ENCODE measurements at regions of chr5 and their contacts with region 1.

Region 1: GRCh38 chr5:55856516-55857246 is 5.5 kb downstream of the IL31RA start:
- DNase-seq: peak; percentile 28
- H3K4me3 Mint-ChIP-seq: peak overlapping the region; percentile 26
- H3K27ac Mint-ChIP-seq: peak overlapping the region; percentile 13
- H3K4me1 Mint-ChIP-seq: peaks cover 56% of the 10 kb centered on the region
- H3K27me3 Mint-ChIP-seq: no peaks in the 10 kb centered on the region

Region 2: GRCh38 chr5:55711968-55712859 is 144.5 kb before region 1 on chr5 and contains the start of gene SLC38A9:
- intact Hi-C with region 1: loop called (anchors 2 kb)
- DNase-seq: peak; percentile 88
- H3K4me3 Mint-ChIP-seq: peak within 1 kb of the TSS; percentile 98
- H3K27ac Mint-ChIP-seq: peak within 1 kb of the TSS; percentile 90
- H3K4me1 Mint-ChIP-seq: peaks cover 30% of the 10 kb centered on the region
- H3K27me3 Mint-ChIP-seq: peaks cover 4% of the 10 kb centered on the region
- total RNA-seq, gene SLC38A9: 19.3 and 22.2 TPM in 2 replicates

Region 3: GRCh38 chr5:55763746-55764420 is 92.8 kb before region 1 on chr5:
- intact Hi-C with region 1: loop called (anchors 2 kb)
- DNase-seq: no peak
- H3K4me3 Mint-ChIP-seq: peak overlapping the region; percentile 61
- H3K27ac Mint-ChIP-seq: peak overlapping the region; percentile 62
- H3K4me1 Mint-ChIP-seq: peaks cover 39% of the 10 kb centered on the region
- H3K27me3 Mint-ChIP-seq: no peaks in the 10 kb centered on the region

Region 4: DNA sequence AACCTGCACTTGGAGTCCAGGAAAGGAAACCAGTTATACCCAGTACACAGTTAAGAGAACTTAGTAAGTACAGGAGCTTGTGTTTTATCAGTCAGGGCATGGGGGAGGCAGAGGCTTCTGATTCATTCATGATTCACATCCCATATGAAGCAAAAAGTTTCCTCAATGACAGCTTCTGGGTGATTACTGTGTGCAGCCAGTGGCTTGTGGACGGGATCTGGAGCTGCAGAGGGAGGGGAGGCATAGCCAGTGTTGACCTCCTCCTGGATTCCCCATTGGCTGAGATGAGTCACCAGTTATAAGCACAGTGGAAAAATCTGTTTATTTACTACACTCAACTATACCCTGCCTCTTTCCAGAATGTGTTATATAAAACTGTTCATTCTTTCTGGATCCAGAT is 12.2 kb after region 1 on chr5:
- intact Hi-C with region 1: loop called (anchors 1 kb)
- DNase-seq: no peak
- H3K4me3 Mint-ChIP-seq: no peak overlapping the region
- H3K27ac Mint-ChIP-seq: peak overlapping the region; percentile 6
- H3K4me1 Mint-ChIP-seq: peaks cover 20% of the 10 kb centered on the region
- H3K27me3 Mint-ChIP-seq: no peaks in the 10 kb centered on the region

Region 5: GRCh38 chr5:55897905-55898304 is 41.2 kb after region 1 on chr5:
- intact Hi-C with region 1: loop called (anchors 2 kb)
- DNase-seq: no peak
- H3K4me3 Mint-ChIP-seq: no peak overlapping the region
- H3K27ac Mint-ChIP-seq: no peak overlapping the region
- H3K4me1 Mint-ChIP-seq: peaks cover 39% of the 10 kb centered on the region
- H3K27me3 Mint-ChIP-seq: peaks cover 3% of the 10 kb centered on the region

Region 6: DNA sequence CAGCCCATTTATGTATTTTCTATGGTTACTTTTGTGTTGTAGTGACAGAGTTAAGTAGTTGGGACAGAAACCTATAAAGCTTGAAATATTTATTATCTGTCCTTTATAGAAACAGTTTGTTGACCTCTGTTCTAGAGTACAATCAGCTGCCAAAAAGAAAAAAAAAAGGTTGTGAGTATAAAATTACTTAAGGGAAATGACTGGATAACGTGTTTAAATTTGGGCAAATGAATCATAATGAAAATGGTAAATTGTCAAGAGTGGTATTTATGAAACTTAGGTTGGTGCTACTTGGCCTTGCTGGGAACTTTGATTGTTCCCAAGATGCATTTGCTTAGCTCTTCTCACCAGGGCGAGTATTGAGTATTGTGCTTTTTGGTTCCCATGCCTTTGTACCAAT is 208.3 kb after region 1 on chr5:
- intact Hi-C with region 1: no loop called
- DNase-seq: no peak
- H3K4me3 Mint-ChIP-seq: no peak overlapping the region
- H3K27ac Mint-ChIP-seq: no peak overlapping the region
- H3K4me1 Mint-ChIP-seq: peaks cover 29% of the 10 kb centered on the region
- H3K27me3 Mint-ChIP-seq: peaks cover 38% of the 10 kb centered on the region

Measured in activated T-helper 2 cell treated with anti-CD3 and anti-CD28 coated beads, Interferon-gamma antibody, Interleukin-2, Interleukin-4, amounts not matched to agents 10 μg/mL and 5 μg/mL and 100 μg/mL, durations not matched to agents 14 hours and 24 hours and 36 hours (primary cell).